BJ (cell line): ENCODE measurements at regions of chr4 and their contacts with region 1.

Region 1: DNA sequence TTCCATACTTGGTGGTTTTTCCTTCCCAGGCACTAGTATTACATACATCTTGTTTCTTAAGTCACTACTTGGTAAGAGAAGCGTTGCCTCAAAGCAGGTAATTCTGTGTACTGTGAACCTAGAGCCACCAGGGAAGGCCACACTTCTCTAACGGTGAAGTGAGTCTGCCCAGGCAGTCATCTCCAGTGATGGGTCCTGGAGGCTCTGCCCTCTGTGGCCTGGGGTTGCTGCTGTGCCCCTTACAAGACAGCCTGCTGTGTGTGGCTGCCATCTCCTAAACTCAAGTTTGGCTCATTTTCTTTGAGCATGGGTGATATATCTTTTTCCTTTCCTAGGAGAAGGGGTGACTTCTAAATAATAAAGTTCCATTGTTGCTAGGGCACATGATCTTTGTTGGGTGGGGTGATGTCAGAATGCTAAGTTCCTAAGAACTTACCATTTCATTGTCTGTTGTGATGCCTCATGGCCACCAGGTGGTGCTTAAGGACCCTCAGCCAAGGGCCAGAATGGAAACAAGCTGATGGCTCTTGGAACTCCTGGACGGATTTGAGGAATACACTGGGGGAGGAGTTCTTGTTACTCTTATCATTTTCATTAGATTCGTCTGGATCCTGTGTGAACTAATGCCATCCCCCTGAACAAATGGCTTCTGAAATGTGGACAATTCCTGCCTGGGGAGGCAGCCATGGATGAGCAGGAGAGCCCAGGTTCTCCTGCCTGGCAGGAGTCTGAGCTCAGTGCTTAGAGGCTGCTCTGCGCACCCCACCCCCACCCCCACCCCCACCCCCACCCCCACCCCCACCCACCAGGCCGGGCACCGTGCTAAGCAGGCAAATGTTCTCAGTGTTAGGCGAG is 41.1 kb upstream of the WDR1 start:
- DNase-seq: no peak
- H3K4me3 ChIP-seq: no peak overlapping the region
- H3K27me3 ChIP-seq: peaks cover 11% of the 10 kb centered on the region
- CTCF ChIP-seq: peak; percentile 84

Region 2: DNA sequence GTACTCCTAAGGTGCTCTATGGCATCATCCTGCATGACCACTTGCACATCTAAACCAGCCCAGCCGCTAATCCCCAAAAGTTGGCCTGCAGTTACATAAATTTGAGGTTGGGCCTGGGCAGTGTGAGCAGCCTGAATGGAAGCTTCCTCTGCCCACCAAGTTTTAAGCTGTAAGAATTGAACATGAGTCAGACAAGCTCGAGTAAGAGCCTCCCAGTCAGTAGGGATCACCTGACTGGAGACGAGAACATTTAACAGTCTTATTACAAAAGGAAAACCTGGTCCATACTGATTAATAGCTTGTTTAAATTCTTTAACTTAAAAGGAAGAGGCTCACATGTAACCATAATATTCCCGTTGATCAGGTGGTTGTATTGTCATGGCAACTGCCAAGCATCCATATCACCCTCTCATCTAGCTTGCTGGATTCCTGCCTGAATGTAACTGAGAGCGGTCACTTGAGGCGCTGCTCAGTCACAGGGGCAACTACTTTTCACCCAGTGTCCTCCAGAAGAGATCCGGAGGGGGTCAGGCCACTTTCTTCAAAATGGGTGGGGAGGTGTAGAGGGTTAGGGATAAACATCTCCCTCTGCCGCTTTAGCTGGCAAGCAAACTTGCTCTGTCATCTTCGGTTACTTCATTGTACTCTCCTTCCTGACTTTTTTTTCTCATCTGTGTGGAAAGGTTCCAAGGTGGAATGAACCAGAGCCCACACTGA is 15.5 kb after region 1 on chr4:
- CTCF ChIA-PET with region 1: interaction called, 30 read pairs
- POLR2A ChIA-PET with region 1: no interaction called
- DNase-seq: no peak
- H3K4me3 ChIP-seq: no peak overlapping the region
- H3K27me3 ChIP-seq: no peaks in the 10 kb centered on the region
- CTCF ChIP-seq: no peak

Region 3: GRCh38 chr4:10253755-10254154 is 96.0 kb after region 1 on chr4:
- CTCF ChIA-PET with region 1: no interaction called
- POLR2A ChIA-PET with region 1: no interaction called
- DNase-seq: no peak
- H3K4me3 ChIP-seq: no peak overlapping the region
- H3K27me3 ChIP-seq: 0 out of 2 replicates have a peak, but pooled peaks cover 2% of the 10 kb centered on the region
- CTCF ChIP-seq: no peak

Region 4: DNA sequence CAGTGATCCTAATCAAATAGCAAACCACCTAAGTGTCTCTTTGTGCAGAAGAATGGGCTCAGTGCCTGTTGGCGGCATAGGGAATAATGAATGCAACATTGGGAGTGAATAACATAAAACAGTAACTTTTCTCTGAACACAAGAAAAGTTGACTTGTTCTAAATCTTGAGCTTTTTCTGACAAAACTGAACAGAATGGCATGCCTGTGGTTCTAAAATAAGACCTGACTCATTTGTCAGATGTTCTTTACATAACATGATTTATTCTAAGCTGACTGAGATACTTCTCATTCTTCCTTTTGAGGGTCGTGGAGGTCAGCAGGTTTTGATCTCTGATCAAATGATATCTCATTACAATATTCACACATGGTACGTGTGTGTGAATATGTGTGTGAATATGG is 124.3 kb after region 1 on chr4:
- CTCF ChIA-PET with region 1: no interaction called
- POLR2A ChIA-PET with region 1: no interaction called
- DNase-seq: no peak
- H3K4me3 ChIP-seq: no peak overlapping the region
- H3K27me3 ChIP-seq: no peaks in the 10 kb centered on the region
- CTCF ChIP-seq: no peak

Region 5: DNA sequence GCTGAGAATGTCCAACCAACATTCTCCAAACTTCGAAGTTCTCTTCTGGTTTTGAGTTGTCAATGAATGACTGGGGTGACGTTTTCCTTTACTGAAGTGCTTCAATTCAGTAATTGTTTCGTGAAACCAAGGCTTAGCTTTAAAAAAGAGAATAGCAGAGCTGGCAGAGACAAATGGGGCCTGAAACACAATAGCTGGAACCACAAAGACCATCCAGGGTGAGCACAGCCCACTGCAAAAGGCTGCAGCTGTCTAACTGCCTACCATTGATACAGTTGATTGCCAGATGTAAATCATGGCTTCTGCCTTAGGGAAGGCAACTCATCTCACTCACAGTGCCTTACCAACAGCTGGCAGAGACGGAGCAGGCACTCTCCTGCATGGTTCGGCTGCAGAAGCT is 378.2 kb after region 1 on chr4:
- CTCF ChIA-PET with region 1: interaction called, 73 read pairs
- POLR2A ChIA-PET with region 1: no interaction called
- DNase-seq: no peak
- H3K4me3 ChIP-seq: no peak overlapping the region
- H3K27me3 ChIP-seq: peaks cover 3% of the 10 kb centered on the region; the same call in 1 of the 2 replicates
- CTCF ChIP-seq: no peak

Region 6: GRCh38 chr4:10554694-10555093 is 397.0 kb after region 1 on chr4:
- CTCF ChIA-PET with region 1: interaction called, 65 read pairs
- POLR2A ChIA-PET with region 1: no interaction called
- DNase-seq: no peak
- H3K4me3 ChIP-seq: no peak overlapping the region
- H3K27me3 ChIP-seq: no peaks in the 10 kb centered on the region
- CTCF ChIP-seq: peak; percentile 78